RWPE1 (cell line): ENCODE measurements at regions of chr21 and their contacts with region 1.

Region 1: GRCh38 chr21:30340441-30341241 is 3.1 kb upstream of the KRTAP27-1 start:
- DNase-seq: peak; percentile 56
- H3K27ac ChIP-seq: no peak overlapping the region
- CTCF ChIP-seq: peak; percentile 85

Region 2: GRCh38 chr21:30329203-30329875 is 11.3 kb before region 1 on chr21:
- CTCF ChIA-PET with region 1: no interaction called
- POLR2A ChIA-PET with region 1: no interaction called
- DNase-seq: peak; percentile 8
- H3K27ac ChIP-seq: no peak overlapping the region
- CTCF ChIP-seq: no peak

Region 3: GRCh38 chr21:30434033-30434631 is 93.5 kb after region 1 on chr21:
- CTCF ChIA-PET with region 1: interaction called, 12 read pairs
- POLR2A ChIA-PET with region 1: no interaction called
- DNase-seq: peak; percentile 21
- H3K27ac ChIP-seq: no peak overlapping the region
- CTCF ChIP-seq: peak; percentile 79

Region 4: GRCh38 chr21:30634906-30635305 is 294.3 kb after region 1 on chr21 and contains the start of gene KRTAP20-2:
- CTCF ChIA-PET with region 1: no interaction called
- POLR2A ChIA-PET with region 1: no interaction called
- DNase-seq: no peak
- H3K27ac ChIP-seq: no peak within 1 kb of the TSS
- CTCF ChIP-seq: no peak